ENCODE measurements at regions of chr5 and their contacts with region 1.

Region 1: GRCh38 chr5:78269088-78269703 is 25.3 kb downstream of the AP3B1 start:
- DNase-seq: no peak
- H3K4me3 ChIP-seq: no peak overlapping the region
- H3K27ac ChIP-seq: no peak overlapping the region
- H3K4me1 ChIP-seq: no peaks in the 10 kb centered on the region
- H3K27me3 ChIP-seq: no peaks in the 10 kb centered on the region
- CTCF ChIP-seq: peak; percentile 77

Region 2: GRCh38 chr5:77560677-77561263 is 708.4 kb before region 1 on chr5:
- CTCF ChIA-PET with region 1: no interaction called
- POLR2A ChIA-PET with region 1: no interaction called
- intact Hi-C with region 1: loop called (anchors 2 kb)
- DNase-seq: peak in 1 of 2 experiments; percentile 40
- H3K4me3 ChIP-seq: no peak overlapping the region
- H3K27ac ChIP-seq: no peak overlapping the region
- H3K4me1 ChIP-seq: no peaks in the 10 kb centered on the region
- H3K27me3 ChIP-seq: no peaks in the 10 kb centered on the region
- CTCF ChIP-seq: peak; percentile 71

Region 3: GRCh38 chr5:77662635-77663034 is 606.6 kb before region 1 on chr5:
- CTCF ChIA-PET with region 1: no interaction called
- POLR2A ChIA-PET with region 1: interaction called, 24 read pairs
- intact Hi-C with region 1: no loop called
- DNase-seq: no peak
- H3K4me3 ChIP-seq: no peak overlapping the region
- H3K27ac ChIP-seq: no peak overlapping the region
- H3K4me1 ChIP-seq: no peaks in the 10 kb centered on the region
- H3K27me3 ChIP-seq: no peaks in the 10 kb centered on the region
- CTCF ChIP-seq: no peak

Region 4: GRCh38 chr5:77733130-77733529 is 536.1 kb before region 1 on chr5:
- CTCF ChIA-PET with region 1: interaction called, 12 read pairs
- POLR2A ChIA-PET with region 1: no interaction called
- intact Hi-C with region 1: no loop called
- DNase-seq: no peak
- H3K4me3 ChIP-seq: no peak overlapping the region
- H3K27ac ChIP-seq: no peak overlapping the region
- H3K4me1 ChIP-seq: no peaks in the 10 kb centered on the region
- H3K27me3 ChIP-seq: no peaks in the 10 kb centered on the region
- CTCF ChIP-seq: no peak

Region 5: DNA sequence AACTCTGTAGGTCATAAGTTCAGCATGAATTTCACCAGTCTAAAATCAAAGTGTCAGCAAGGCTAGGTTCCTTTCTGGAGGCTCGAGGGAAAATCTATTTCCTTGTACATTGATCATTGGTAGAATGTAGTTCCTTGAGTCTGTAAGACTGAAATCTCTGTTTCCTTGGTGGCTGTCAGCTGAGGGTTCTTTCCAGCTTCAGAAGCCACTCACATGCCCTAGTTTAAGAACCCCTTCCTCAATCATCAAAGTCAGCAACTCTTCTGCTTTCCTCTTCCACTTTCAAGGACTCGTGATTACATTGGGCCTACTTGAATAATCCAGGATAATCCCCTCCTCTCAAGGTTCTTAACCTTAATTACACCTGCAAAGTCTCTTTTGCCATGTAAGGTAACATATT is 86.4 kb after region 1 on chr5:
- CTCF ChIA-PET with region 1: no interaction called
- POLR2A ChIA-PET with region 1: no interaction called
- intact Hi-C with region 1: no loop called
- DNase-seq: no peak
- H3K4me3 ChIP-seq: no peak overlapping the region
- H3K27ac ChIP-seq: no peak overlapping the region
- H3K4me1 ChIP-seq: no peaks in the 10 kb centered on the region
- H3K27me3 ChIP-seq: no peaks in the 10 kb centered on the region
- CTCF ChIP-seq: no peak

Measured in PC-9 (cell line).